Head of caudate nucleus (tissue), 42 donors: ENCODE measurements at regions of chr12 and their contacts with region 1.

Region 1: GRCh38 chr12:53005986-53006809 is at the start of gene EIF4B:
- DNase-seq: peak; percentile 98 to 100 (median 100)

Region 2: DNA sequence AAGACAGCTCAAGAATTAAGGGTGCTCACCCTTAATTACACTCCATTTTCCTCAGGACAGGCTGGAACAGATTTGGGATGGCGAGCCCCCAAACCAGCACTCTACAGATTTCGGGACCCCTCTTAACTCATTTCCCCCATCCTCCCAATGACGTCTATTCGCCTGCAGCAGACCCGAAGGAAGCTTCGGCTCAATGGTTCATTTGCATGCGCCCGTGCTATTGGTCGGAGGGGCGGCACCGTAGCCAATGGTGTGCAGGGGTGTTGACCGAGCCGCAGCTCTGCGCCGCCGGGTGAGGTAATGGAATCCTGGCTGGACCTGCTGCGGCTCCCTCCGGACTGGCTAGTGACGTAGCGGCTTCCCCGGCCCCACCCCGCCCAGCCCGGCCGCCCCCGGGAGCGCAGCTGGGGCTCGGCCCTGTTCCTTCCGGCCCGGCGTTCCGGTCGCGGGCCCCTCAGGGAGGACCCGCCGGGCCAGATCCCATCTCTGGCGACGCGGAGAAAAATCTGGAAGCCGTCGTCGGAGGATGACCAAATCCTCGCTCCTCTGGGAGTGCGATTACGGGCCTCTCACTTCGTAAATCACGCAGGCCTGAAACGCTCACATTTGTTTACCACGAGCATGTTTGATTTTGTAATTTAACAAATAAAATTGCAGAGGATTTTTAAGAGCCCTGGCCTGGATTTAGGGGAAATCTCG is 973.2 kb before region 1 on chr12:
- intact Hi-C with region 1: loop called (anchors 10 kb)
- DNase-seq: peak; percentile 93 to 99 (median 98)

Region 3: GRCh38 chr12:53047221-53048042 is 41.2 kb after region 1 on chr12:
- intact Hi-C with region 1: loop called (anchors 5 kb)
- DNase-seq: peak in 40 of 42 donors; percentile 50 to 89 (median 74)